ENCODE measurements at regions of chr17 and their contacts with region 1.

Region 1: DNA sequence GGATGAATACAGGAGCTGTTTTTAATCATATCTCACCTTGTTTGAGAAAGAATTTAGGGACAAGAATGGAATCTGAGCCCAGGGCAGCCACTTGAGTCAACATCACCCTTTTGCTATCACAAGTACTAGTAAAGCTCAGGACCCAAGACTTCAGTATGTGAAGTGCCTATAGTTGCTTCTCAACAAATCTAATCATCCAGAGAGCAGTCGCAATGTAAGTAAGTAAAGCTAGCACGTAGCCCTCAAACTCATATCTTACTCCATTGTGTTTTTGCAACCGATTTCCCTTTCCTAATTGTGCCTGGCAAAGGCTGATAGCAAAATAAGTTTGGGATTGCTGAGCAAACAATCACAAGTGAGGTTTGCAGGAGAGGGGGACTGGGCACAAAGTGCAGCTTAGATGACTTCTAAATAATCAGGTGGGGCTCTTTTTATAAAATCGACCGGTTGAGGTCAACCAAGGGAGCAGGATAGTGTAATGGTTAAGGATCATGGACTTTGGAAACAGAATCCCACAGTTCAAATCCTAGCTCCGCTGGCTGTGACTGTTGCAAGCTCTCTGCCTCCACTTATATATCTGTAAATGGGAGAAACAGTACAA is 13.0 kb downstream of the TOB1 start:
- DNase-seq: no peak
- H3K4me3 Mint-ChIP-seq: no peak overlapping the region
- H3K27ac Mint-ChIP-seq: peak overlapping the region; percentile 91
- H3K4me1 Mint-ChIP-seq: peaks cover 29% of the 10 kb centered on the region
- H3K27me3 Mint-ChIP-seq: peaks cover 5% of the 10 kb centered on the region

Region 2: GRCh38 chr17:50425682-50426471 is 427.2 kb before region 1 on chr17 and contains the start of gene ACSF2:
- CTCF ChIA-PET with region 1: no interaction called
- POLR2A ChIA-PET with region 1: no interaction called
- DNase-seq: peak; percentile 77
- H3K4me3 Mint-ChIP-seq: peak within 1 kb of the TSS; percentile 81
- H3K27ac Mint-ChIP-seq: peak within 1 kb of the TSS; percentile 87
- H3K4me1 Mint-ChIP-seq: peaks cover 33% of the 10 kb centered on the region
- H3K27me3 Mint-ChIP-seq: no peaks in the 10 kb centered on the region
- total RNA-seq, gene ACSF2: 24.5 to 31.4 TPM

Region 3: GRCh38 chr17:50771991-50772785 is 80.9 kb before region 1 on chr17:
- CTCF ChIA-PET with region 1: no interaction called
- POLR2A ChIA-PET with region 1: no interaction called
- DNase-seq: no peak
- H3K4me3 Mint-ChIP-seq: no peak overlapping the region
- H3K27ac Mint-ChIP-seq: no peak overlapping the region
- H3K4me1 Mint-ChIP-seq: peaks cover 9% of the 10 kb centered on the region
- H3K27me3 Mint-ChIP-seq: peaks cover 29% of the 10 kb centered on the region

Region 4: GRCh38 chr17:50841949-50842354 is 11.2 kb before region 1 on chr17:
- CTCF ChIA-PET with region 1: interaction called, 27 read pairs
- POLR2A ChIA-PET with region 1: no interaction called
- DNase-seq: peak; percentile 61
- H3K4me3 Mint-ChIP-seq: no peak overlapping the region
- H3K27ac Mint-ChIP-seq: no peak overlapping the region
- H3K4me1 Mint-ChIP-seq: peaks cover 2% of the 10 kb centered on the region
- H3K27me3 Mint-ChIP-seq: no peaks in the 10 kb centered on the region

Region 5: DNA sequence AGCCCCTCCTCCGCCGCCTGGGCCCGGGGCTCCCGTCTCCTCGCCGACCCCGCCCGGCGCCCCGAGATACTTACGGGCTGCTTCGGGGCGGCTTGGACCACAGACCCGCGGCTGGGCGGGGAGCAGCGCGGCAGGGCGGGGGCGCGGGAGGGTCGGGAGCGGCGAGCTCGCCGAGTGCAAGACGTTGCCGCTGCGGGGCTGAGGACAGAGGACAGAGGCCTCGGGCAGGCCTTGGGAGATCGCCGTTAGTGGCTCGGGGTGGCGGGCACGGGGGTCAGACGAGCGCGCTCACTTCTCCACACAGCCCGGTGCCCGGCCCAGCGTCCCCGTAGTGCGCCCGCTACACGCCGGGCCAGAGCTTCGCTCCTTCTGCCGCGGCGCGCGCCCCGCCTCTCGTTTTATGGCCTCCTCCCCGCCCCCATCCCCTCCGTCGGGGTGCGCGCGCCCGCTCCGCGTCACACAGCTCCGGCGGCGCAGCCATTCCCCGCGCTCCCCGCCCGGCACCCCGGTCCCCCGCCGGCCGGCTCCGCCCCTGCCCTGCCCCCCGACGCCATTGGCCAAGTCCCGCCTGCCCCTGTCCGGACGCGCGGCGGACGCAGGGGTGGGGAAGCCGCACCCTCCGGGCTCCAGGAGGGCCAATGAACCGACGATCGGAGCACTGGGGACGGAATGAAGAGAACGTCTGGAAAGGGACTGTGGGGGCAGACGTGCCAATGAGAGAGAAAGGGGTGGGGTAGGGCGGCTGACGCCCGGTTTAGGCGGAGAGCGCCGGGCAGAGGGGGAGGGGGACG is 13.1 kb after region 1 on chr17 and contains the start of gene TOB1:
- CTCF ChIA-PET with region 1: interaction called, 20 read pairs
- POLR2A ChIA-PET with region 1: interaction called, 8 read pairs
- DNase-seq: peak; percentile 96
- H3K4me3 Mint-ChIP-seq: peak within 1 kb of the TSS; percentile 88
- H3K27ac Mint-ChIP-seq: peak within 1 kb of the TSS; percentile 98
- H3K4me1 Mint-ChIP-seq: peaks cover 48% of the 10 kb centered on the region
- H3K27me3 Mint-ChIP-seq: no peaks in the 10 kb centered on the region
- total RNA-seq, gene TOB1: 81.8 to 99.0 TPM

Region 6: DNA sequence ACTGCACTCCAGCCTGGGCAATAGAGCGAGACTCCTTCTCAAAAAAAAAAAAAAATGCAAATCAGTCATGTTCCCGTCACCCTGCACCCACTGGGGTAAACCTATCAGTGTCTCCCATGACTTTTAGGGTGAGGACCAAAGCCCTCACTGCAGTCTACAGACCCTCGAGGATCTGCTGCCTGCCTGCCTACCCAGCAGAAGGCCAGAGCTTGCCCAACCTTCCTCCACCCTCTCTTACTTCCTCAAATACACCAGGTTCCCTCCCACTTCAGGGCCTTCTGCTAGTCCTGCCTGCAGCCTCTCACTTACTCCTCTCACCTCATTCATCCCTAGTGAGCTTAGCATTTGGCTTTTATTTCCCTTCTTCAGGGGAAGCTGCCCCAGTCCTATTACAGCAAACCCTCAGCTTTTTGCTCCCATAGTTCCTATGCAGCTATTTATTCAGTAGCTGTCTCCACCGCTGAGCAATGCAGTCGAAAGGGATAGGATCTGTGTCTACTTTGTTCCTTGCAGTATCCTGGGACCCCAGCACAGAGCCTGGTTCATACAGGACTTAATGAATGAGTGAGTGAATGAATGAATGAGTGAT is 30.8 kb after region 1 on chr17:
- CTCF ChIA-PET with region 1: no interaction called
- POLR2A ChIA-PET with region 1: no interaction called
- DNase-seq: no peak
- H3K4me3 Mint-ChIP-seq: no peak overlapping the region
- H3K27ac Mint-ChIP-seq: peak overlapping the region; percentile 48
- H3K4me1 Mint-ChIP-seq: peaks cover 44% of the 10 kb centered on the region
- H3K27me3 Mint-ChIP-seq: peaks cover 8% of the 10 kb centered on the region

Region 7: DNA sequence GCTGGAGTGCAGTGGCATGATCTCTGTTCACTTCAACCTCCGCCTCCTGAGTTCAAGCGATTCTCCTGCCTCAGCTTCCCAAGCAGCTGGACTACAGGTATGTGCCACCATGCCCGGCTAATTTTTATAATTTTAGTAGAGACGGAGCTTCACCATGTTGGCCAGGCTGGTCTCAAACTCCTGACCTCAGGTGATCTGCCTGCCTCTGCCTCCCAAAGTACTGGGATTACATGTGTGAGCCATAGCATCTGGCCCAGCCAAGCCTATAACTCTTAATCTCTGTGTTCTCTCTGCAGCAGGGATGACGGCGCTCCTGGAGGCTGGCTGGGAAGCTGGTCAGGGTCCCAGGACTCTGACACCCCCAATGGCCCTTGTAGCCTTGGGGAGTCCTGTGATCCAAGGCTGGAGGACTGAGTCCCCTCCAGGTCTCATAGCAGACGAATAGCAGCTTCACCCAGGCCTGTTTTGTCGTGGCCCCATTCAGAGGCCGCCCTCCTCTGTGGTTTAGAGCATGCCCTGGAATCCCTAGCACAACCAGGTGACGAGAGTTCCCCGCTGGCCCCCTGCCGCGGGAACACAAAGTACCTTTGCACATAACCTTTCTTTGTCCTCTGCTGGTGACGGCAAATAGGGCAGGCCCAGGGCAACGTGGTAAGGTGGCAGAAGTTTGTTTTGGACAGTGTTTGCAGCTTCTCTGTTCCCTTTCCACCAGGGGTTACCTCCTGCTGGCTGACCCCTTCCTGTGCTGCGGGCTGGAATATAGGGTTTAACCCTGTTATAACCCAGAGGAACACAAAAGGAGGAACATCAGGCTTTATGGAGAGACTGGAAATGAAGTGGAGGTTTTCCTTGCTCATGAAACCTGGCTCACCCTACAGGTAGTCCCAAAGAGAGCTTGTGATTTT is 56.0 kb after region 1 on chr17:
- CTCF ChIA-PET with region 1: no interaction called
- POLR2A ChIA-PET with region 1: no interaction called
- DNase-seq: no peak
- H3K4me3 Mint-ChIP-seq: no peak overlapping the region
- H3K27ac Mint-ChIP-seq: peak overlapping the region; percentile 96
- H3K4me1 Mint-ChIP-seq: peaks cover 68% of the 10 kb centered on the region
- H3K27me3 Mint-ChIP-seq: no peaks in the 10 kb centered on the region

Region 8: GRCh38 chr17:50944054-50944901 is 91.2 kb after region 1 on chr17:
- CTCF ChIA-PET with region 1: interaction called, 35 read pairs
- POLR2A ChIA-PET with region 1: interaction called, 3 read pairs
- DNase-seq: peak; percentile 87
- H3K4me3 Mint-ChIP-seq: peak overlapping the region; percentile 76
- H3K27ac Mint-ChIP-seq: peak overlapping the region; percentile 89
- H3K4me1 Mint-ChIP-seq: peaks cover 46% of the 10 kb centered on the region
- H3K27me3 Mint-ChIP-seq: no peaks in the 10 kb centered on the region

Region 9: GRCh38 chr17:50949989-50950881 is 97.1 kb after region 1 on chr17:
- CTCF ChIA-PET with region 1: interaction called, 35 read pairs
- POLR2A ChIA-PET with region 1: interaction called, 3 read pairs
- DNase-seq: peak; percentile 55
- H3K4me3 Mint-ChIP-seq: no peak overlapping the region
- H3K27ac Mint-ChIP-seq: no peak overlapping the region
- H3K4me1 Mint-ChIP-seq: peaks cover 52% of the 10 kb centered on the region
- H3K27me3 Mint-ChIP-seq: no peaks in the 10 kb centered on the region

Region 10: GRCh38 chr17:50956750-50957523 is 103.8 kb after region 1 on chr17:
- CTCF ChIA-PET with region 1: interaction called, 35 read pairs
- POLR2A ChIA-PET with region 1: no interaction called
- DNase-seq: peak; percentile 78
- H3K4me3 Mint-ChIP-seq: no peak overlapping the region
- H3K27ac Mint-ChIP-seq: no peak overlapping the region
- H3K4me1 Mint-ChIP-seq: peaks cover 18% of the 10 kb centered on the region
- H3K27me3 Mint-ChIP-seq: no peaks in the 10 kb centered on the region

Region 11: GRCh38 chr17:50963139-50963538 is 110.0 kb after region 1 on chr17:
- CTCF ChIA-PET with region 1: interaction called, 31 read pairs
- POLR2A ChIA-PET with region 1: no interaction called
- DNase-seq: no peak
- H3K4me3 Mint-ChIP-seq: no peak overlapping the region
- H3K27ac Mint-ChIP-seq: no peak overlapping the region
- H3K4me1 Mint-ChIP-seq: peaks cover 12% of the 10 kb centered on the region
- H3K27me3 Mint-ChIP-seq: no peaks in the 10 kb centered on the region

Measured in activated CD4-positive, alpha-beta T cell treated with anti-CD3 and anti-CD28 coated beads, Interleukin-2, amount 10 ng/mL, durations not matched to agents 7 days and 5 days (primary cell).